Sigmoid colon (tissue), 7 donors: ENCODE measurements at regions of chr6 and their contacts with region 1.

Region 1: DNA sequence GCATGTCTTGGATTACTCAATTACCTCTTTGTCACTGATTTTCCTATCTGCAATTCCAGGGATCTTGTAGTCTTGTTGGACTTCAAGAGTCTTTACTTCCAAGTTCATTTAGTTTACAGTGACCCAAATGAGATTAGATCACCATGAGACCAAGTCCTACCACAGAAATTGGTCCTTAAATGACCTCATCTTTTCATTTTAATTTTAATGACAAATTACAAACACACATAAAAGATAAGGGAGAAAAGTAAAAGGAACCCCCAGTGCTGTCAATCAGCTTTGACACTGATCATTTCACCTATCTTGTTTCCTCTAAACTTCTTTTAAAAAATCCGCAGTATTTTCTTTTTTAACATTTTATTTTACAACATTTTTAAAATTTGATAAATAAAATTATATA is 54.9 kb upstream of the FYN start:
- DNase-seq: no peak
- H3K4me3 ChIP-seq: no peak overlapping the region
- H3K27ac ChIP-seq: no peak overlapping the region
- H3K4me1 ChIP-seq: no peaks in the 10 kb centered on the region
- H3K27me3 ChIP-seq: no peaks in the 10 kb centered on the region
- CTCF ChIP-seq: no peak
- EP300 ChIP-seq: no peak
- POLR2A ChIP-seq: no peak

Region 2: DNA sequence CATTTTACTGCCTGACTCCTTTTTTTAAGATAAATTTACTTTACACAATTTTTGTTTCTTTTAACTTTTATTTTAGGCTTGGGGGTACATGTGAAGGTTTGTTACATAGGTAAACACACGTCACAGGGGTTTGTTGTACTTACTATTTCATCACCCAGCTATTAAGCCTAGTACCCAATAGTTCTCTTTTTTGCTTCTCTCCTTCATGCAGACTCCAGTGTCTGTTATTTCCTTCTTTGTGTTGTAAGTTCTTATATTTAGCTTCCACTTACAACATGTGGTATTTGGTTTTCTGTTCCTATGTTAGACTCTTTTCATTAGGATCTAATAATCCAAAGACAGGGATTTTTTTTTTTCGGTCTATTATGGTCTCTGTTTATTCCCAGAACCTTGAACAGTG is 42.3 kb after region 1 on chr6:
- intact Hi-C with region 1: loop called (anchors 2 kb)
- DNase-seq: no peak
- H3K4me3 ChIP-seq: no peak overlapping the region
- H3K27ac ChIP-seq: no peak overlapping the region
- H3K4me1 ChIP-seq: peaks cover 0 to 15% (median 8%) of the 10 kb centered on the region in 4 donors
- H3K27me3 ChIP-seq: no peaks in the 10 kb centered on the region
- CTCF ChIP-seq: no peak
- EP300 ChIP-seq: no peak
- POLR2A ChIP-seq: no peak